Activated T-helper 2 cell treated with anti-CD3 and anti-CD28 coated beads, Interferon-gamma antibody, Interleukin-2, Interleukin-4, amounts not matched to agents 10 μg/mL and 5 μg/mL and 100 μg/mL, durations not matched to agents 14 hours and 24 hours and 36 hours (primary cell): ENCODE measurements at regions of chr22 and their contacts with region 1.

Region 1: GRCh38 chr22:22959147-22959827 is 71.7 kb downstream of the IGLL5 start:
- DNase-seq: peak; percentile 50
- H3K4me3 Mint-ChIP-seq: no peak overlapping the region
- H3K27ac Mint-ChIP-seq: no peak overlapping the region
- H3K4me1 Mint-ChIP-seq: peaks cover 3% of the 10 kb centered on the region
- H3K27me3 Mint-ChIP-seq: peaks cover 33% of the 10 kb centered on the region

Region 2: DNA sequence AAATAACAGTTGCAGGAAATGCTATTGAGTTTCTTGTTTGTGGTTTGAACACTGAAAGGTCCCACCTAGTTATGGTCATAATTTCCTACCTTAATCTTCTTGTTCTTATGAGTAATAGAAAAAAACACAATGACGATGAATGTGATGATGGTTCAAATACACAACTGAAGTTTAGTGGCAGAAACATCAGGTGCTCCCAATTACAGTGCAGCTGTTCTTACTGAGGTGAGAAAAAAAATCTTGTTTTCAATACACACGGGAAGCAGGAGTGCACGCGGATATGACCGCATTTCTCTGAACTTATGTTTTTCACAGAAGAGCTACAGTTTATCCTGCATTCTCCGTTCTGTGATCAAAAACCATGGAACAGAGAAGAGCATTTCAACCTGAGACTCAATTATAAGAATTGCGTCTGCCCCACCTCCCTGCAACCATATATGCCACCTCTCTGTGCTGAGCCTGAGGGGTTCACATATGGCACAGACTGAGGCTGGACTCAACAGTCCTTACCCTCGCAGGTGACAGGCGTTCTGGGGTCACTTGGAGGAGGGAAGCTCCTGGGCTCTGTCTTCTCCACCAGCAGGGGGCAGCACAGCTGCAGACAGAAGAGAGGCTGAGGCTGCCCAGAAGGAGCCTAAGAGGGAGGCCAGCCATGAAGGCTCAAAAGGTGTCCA is 171.4 kb before region 1 on chr22:
- intact Hi-C with region 1: loop called (anchors 5 kb)
- DNase-seq: peak; percentile 52
- H3K4me3 Mint-ChIP-seq: no peak overlapping the region
- H3K27ac Mint-ChIP-seq: no peak overlapping the region
- H3K4me1 Mint-ChIP-seq: peaks cover 6% of the 10 kb centered on the region
- H3K27me3 Mint-ChIP-seq: peaks cover 15% of the 10 kb centered on the region

Region 3: GRCh38 chr22:22810018-22810427 is 149.3 kb before region 1 on chr22:
- intact Hi-C with region 1: loop called (anchors 10 kb)
- DNase-seq: peak; percentile 49
- H3K4me3 Mint-ChIP-seq: no peak overlapping the region
- H3K27ac Mint-ChIP-seq: no peak overlapping the region
- H3K4me1 Mint-ChIP-seq: peaks cover 3% of the 10 kb centered on the region
- H3K27me3 Mint-ChIP-seq: peaks cover 35% of the 10 kb centered on the region

Region 4: GRCh38 chr22:22848364-22848866 is 110.9 kb before region 1 on chr22:
- intact Hi-C with region 1: loop called (anchors 2 kb)
- DNase-seq: peak; percentile 53
- H3K4me3 Mint-ChIP-seq: no peak overlapping the region
- H3K27ac Mint-ChIP-seq: no peak overlapping the region
- H3K4me1 Mint-ChIP-seq: peaks cover 2% of the 10 kb centered on the region
- H3K27me3 Mint-ChIP-seq: peaks cover 42% of the 10 kb centered on the region

Region 5: GRCh38 chr22:22884010-22884887 is 75.0 kb before region 1 on chr22:
- intact Hi-C with region 1: loop called (anchors 2 kb)
- DNase-seq: peak; percentile 64
- H3K4me3 Mint-ChIP-seq: no peak overlapping the region
- H3K27ac Mint-ChIP-seq: no peak overlapping the region
- H3K4me1 Mint-ChIP-seq: peaks cover 15% of the 10 kb centered on the region
- H3K27me3 Mint-ChIP-seq: peaks cover 29% of the 10 kb centered on the region

Region 6: DNA sequence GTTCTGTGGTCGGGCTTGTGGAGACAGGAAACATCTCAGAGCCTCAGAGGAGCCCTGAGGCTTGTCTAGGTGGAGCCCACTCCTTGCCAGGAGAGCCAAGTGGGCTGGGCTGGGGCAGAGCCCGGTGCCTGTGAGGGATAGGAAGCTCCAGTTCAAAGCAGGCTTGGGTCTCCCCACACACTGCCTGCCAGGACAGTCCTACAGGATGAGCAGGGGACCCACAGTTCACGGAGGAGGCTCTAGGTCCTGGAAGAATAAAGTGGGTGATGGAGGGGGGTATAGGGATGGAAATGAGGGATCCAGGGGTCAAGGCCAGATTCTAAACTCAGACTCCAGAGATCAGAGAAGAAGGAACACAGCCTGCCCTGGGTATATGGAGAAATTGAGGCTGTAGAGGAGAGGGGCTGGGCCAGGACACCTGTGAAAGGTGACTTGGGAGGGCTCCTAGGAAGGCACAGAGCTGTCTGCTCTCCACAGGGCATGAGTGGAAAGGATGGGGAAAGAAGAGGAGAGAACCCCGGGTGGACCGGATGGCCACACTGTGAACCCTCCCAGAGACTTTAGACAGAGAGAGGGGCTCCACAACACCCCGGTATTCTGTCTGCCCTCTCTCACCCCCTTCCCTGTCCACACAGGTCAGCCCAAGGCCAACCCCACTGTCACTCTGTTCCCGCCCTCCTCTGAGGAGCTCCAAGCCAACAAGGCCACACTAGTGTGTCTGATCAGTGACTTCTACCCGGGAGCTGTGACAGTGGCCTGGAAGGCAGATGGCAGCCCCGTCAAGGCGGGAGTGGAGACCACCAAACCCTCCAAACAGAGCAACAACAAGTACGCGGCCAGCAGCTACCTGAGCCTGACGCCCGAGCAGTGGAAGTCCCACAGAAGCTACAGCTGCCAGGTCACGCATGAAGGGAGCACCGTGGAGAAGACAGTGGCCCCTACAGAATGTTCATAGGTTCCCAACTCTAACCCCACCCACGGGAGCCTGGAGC is 64.3 kb before region 1 on chr22:
- intact Hi-C with region 1: no loop called
- DNase-seq: no peak
- H3K4me3 Mint-ChIP-seq: no peak overlapping the region
- H3K27ac Mint-ChIP-seq: no peak overlapping the region
- H3K4me1 Mint-ChIP-seq: no peaks in the 10 kb centered on the region
- H3K27me3 Mint-ChIP-seq: peaks cover 35% of the 10 kb centered on the region

Region 7: GRCh38 chr22:22942511-22943329 is 16.6 kb before region 1 on chr22:
- intact Hi-C with region 1: no loop called
- DNase-seq: peak; percentile 55
- H3K4me3 Mint-ChIP-seq: no peak overlapping the region
- H3K27ac Mint-ChIP-seq: no peak overlapping the region
- H3K4me1 Mint-ChIP-seq: peaks cover 14% of the 10 kb centered on the region
- H3K27me3 Mint-ChIP-seq: peaks cover 5% of the 10 kb centered on the region

Region 8: DNA sequence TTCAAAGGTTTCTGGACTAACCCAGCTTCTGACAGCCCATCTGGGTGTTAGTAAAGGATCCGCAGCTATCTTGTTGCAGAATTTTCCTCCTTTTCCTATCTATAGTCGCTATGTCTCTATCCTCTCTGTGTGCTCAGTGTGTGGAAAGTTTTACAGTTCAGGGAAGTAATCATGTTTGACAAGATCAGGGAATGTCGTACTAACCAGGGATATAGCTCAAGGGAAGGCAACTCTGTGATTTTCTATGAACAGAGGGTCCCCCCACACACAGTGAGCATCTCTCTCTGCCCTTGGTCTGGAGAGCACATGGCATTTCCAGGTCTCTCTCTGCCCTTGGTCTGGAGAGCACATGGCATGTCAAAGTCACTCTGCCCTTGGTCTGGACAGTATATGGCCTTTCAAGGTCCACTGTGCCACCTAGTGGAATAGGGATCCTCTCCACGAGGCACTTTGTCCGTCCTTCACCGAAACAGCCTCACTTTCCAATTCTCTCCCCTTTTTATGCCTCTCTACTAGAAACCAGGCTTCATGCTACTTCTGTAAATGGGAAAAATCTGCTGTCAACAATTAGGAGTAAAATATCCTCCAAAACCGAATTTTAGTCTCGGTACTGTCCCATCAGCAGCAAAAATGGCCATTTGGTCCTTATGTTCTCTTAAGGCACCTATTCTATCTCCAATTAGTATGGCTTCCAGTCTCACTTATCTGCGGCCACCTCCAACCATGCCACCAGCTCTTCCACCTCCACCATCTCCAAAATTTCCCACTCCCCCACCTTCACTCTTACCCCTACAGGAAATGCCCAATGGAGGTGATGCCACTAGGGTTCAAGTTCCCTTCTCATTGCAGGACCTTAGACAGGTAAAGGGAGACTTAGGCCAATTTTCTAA is 17.0 kb after region 1 on chr22:
- intact Hi-C with region 1: no loop called
- DNase-seq: no peak
- H3K4me3 Mint-ChIP-seq: no peak overlapping the region
- H3K27ac Mint-ChIP-seq: no peak overlapping the region
- H3K4me1 Mint-ChIP-seq: no peaks in the 10 kb centered on the region
- H3K27me3 Mint-ChIP-seq: peaks cover 12% of the 10 kb centered on the region

Region 9: GRCh38 chr22:23128269-23129108 is 169.2 kb after region 1 on chr22:
- intact Hi-C with region 1: loop called (anchors 1 kb)
- DNase-seq: peak; percentile 46
- H3K4me3 Mint-ChIP-seq: no peak overlapping the region
- H3K27ac Mint-ChIP-seq: no peak overlapping the region
- H3K4me1 Mint-ChIP-seq: no peaks in the 10 kb centered on the region
- H3K27me3 Mint-ChIP-seq: peaks cover 3% of the 10 kb centered on the region